ENCODE measurements at regions of chr5 and their contacts with region 1.

Region 1: GRCh38 chr5:50435168-50435567 is 5.9 kb downstream of the EMB start:
- DNase-seq: peak; percentile 30
- H3K4me3 Mint-ChIP-seq: peak overlapping the region; percentile 46
- H3K27ac Mint-ChIP-seq: peak overlapping the region; percentile 82
- H3K4me1 Mint-ChIP-seq: peaks cover 73% of the 10 kb centered on the region
- H3K27me3 Mint-ChIP-seq: no peaks in the 10 kb centered on the region

Region 2: DNA sequence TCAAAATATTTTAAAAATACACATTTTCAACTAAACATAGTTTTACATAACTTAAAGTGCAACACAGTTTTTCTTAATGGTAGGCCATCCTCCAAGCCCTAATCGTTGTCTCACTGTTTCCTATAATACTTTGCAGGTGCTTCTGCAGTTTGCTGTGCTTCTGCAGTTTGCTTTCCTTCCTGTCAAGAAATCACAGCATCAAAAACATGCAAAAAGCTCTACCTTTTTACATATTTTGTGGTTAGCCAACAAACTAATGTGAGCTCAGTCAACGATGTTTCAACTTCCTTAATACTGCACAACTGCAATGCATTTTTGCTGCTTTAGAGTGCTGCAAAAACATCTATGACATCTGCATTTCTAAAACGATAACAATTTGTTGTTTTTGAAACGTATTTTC is 19.3 kb before region 1 on chr5:
- CTCF ChIA-PET with region 1: no interaction called
- intact Hi-C with region 1: loop called (anchors 2 kb)
- DNase-seq: peak; percentile 27
- H3K4me3 Mint-ChIP-seq: no peak overlapping the region
- H3K27ac Mint-ChIP-seq: no peak overlapping the region
- H3K4me1 Mint-ChIP-seq: peaks cover 62% of the 10 kb centered on the region
- H3K27me3 Mint-ChIP-seq: no peaks in the 10 kb centered on the region

Region 3: DNA sequence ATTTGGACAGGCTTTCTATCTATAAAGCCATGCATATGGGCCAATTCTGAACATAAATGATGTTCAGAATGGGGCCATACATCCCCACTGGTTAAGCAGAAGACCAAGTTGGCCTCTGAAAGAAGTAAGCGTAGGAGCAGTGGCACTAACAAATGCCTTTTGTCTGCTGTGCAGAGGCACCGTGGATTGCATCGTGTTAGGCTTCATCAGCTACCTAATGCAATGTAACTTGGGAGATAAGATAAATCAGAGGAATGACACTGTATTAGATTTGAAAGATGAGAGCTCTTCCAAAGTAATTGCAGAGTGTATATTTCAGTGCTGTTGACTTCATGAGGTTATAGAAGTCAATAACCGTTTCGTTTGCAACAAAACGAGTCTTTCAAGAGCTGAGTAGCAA is 379.4 kb after region 1 on chr5:
- CTCF ChIA-PET with region 1: no interaction called
- intact Hi-C with region 1: no loop called
- DNase-seq: no peak
- H3K4me3 Mint-ChIP-seq: no peak overlapping the region
- H3K27ac Mint-ChIP-seq: no peak overlapping the region
- H3K4me1 Mint-ChIP-seq: no peaks in the 10 kb centered on the region
- H3K27me3 Mint-ChIP-seq: no peaks in the 10 kb centered on the region